A549 (cell line): ENCODE measurements at regions of chr12 and their contacts with region 1.

Region 1: DNA sequence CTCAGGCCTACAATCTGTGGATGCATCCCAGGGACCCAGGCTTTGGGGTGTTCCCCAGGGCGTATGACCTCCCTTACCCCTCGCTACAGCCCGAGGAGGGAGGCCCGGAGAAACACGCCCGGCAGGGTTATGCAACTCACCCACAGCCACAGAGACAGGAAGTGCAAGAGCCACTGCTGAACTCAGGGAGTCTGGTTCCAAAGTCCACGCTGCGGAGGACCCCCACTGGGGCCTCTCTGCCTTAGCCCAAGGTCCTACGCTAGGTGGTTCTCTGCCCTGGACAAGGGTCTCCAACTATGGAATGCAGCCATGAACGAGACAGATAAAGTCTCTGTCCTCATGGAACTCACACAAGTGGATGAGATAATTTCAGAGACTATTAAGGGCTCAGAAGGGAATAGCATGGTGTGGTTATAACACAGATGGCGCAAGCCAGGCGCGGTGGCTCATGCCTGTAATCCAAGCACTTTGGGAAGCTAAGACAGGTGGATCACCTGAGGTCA is 11.3 kb downstream of the SCARB1 start:
- DNase-seq: no peak
- ATAC-seq: peak in 1 of 2 experiments; percentile 30; a peak in 3 of 6 replicates
- H3K4me3 ChIP-seq: no peak overlapping the region
- H3K27ac ChIP-seq: peak overlapping the region; percentile 54 to 76
- H3K4me1 ChIP-seq: peaks cover 56% of the 10 kb centered on the region
- CTCF ChIP-seq: no peak
- EP300 ChIP-seq: no peak
- POLR2A ChIP-seq: no peak
- RAD21 ChIP-seq: no peak

Region 2: GRCh38 chr12:124837958-124838803 is 14.2 kb before region 1 on chr12:
- CTCF ChIA-PET with region 1: interaction called, 10 read pairs
- POLR2A ChIA-PET with region 1: interaction called, 8 read pairs
- DNase-seq: peak; percentile 94 to 99
- ATAC-seq: peak; percentile 94
- H3K4me3 ChIP-seq: no peak overlapping the region
- H3K27ac ChIP-seq: peak overlapping the region; percentile 84 to 93
- H3K4me1 ChIP-seq: peaks cover 69% of the 10 kb centered on the region
- CTCF ChIP-seq: no peak
- EP300 ChIP-seq: peak; percentile 32 to 80; a peak in 2 of 5 replicates
- POLR2A ChIP-seq: no peak
- RAD21 ChIP-seq: peak in 1 of 2 experiments; percentile 49; a peak in 4 of 5 replicates